Spleen (tissue), 13 donors: ENCODE measurements at regions of chrX and their contacts with region 1.

Region 1: DNA sequence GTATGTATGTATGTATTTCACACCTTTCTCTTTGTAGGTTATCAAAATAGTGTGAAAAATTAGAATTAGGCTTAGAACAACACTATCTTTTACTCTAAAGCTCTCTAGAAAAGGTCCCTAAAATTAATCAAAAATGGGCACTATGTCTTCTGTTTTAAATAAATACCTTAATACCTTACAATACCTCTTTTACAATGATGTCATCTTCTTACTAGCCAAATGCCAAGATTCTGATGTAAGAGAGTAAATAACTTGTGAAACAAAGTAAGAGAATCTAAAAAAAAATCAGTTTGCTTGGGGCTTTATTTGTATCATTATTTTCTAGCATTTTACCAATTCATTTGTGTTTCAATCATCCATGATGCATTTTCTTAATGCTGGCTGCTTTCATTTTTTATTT is 402.2 kb upstream of the MAGEB2 start:
- DNase-seq: no peak
- H3K4me3 ChIP-seq: no peak overlapping the region
- H3K27ac ChIP-seq: no peak overlapping the region
- H3K4me1 ChIP-seq: no peaks in the 10 kb centered on the region
- H3K27me3 ChIP-seq: peaks cover 0 to 6% (median 0%) of the 10 kb centered on the region in 7 donors
- CTCF ChIP-seq: no peak
- POLR2A ChIP-seq: no peak

Region 2: DNA sequence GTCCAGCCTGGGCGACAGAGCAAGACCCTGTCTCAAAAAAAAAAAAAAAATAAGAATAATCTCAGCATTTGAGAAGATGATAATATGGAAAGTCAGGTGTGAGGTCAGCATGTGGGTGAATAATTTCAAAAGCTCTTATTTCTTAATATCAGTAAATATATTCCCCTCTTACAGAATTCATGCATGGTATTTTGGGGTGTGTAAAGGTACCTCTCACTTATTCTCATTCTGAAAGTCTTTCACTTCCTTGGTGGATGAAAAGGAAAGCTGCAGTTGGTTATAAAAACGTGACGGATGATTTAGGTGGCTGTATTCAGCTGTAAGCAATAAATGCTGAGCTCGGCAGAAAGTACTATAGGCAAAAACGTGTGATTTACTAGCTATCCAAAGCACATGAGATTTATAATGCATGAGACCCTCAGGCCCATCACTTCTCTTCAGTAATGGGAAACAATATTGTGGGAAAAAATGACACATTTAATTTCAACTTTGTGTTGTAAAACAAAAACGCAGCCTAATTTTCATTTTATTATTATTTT is 49.0 kb after region 1 on chrX:
- intact Hi-C with region 1: loop called (anchors 10 kb)
- DNase-seq: no peak
- H3K4me3 ChIP-seq: no peak overlapping the region
- H3K27ac ChIP-seq: no peak overlapping the region
- H3K4me1 ChIP-seq: no peaks in the 10 kb centered on the region
- H3K27me3 ChIP-seq: no peaks in the 10 kb centered on the region
- CTCF ChIP-seq: no peak
- POLR2A ChIP-seq: no peak